ENCODE measurements at regions of chr2 and their contacts with region 1.

Region 1: GRCh38 chr2:113977660-113978523 is 88.0 kb downstream of the ACTR3 start:
- DNase-seq: peak; percentile 46

Region 2: GRCh38 chr2:114550895-114551793 is 573.3 kb after region 1 on chr2:
- in situ Hi-C with region 1: loop called (anchors 25 kb)
- DNase-seq: peak; percentile 53